ENCODE measurements at regions of chr4 and their contacts with region 1.

Region 1: GRCh38 chr4:38675146-38676121 is 11.4 kb downstream of the KLF3 start:
- DNase-seq: peak; percentile 94
- H3K4me3 ChIP-seq: peak overlapping the region in 2 of 4 donors; percentile 4 to 9
- H3K27ac ChIP-seq: peak overlapping the region; percentile 85 to 100 (median 99)
- H3K4me1 ChIP-seq: peaks cover 84 to 99% (median 96%) of the 10 kb centered on the region in 4 donors
- H3K27me3 ChIP-seq: no peaks in the 10 kb centered on the region
- CTCF ChIP-seq: peak; percentile 88 to 95 (median 93)
- EP300 ChIP-seq: no peak
- POLR2A ChIP-seq: no peak

Region 2: GRCh38 chr4:36761607-36762006 is 1913.8 kb before region 1 on chr4:
- intact Hi-C with region 1: no loop called
- DNase-seq: no peak
- H3K4me3 ChIP-seq: no peak overlapping the region
- H3K27ac ChIP-seq: no peak overlapping the region
- H3K4me1 ChIP-seq: no peaks in the 10 kb centered on the region
- H3K27me3 ChIP-seq: peaks cover 0 to 4% (median 0%) of the 10 kb centered on the region in 4 donors
- CTCF ChIP-seq: no peak
- EP300 ChIP-seq: no peak
- POLR2A ChIP-seq: no peak

Region 3: DNA sequence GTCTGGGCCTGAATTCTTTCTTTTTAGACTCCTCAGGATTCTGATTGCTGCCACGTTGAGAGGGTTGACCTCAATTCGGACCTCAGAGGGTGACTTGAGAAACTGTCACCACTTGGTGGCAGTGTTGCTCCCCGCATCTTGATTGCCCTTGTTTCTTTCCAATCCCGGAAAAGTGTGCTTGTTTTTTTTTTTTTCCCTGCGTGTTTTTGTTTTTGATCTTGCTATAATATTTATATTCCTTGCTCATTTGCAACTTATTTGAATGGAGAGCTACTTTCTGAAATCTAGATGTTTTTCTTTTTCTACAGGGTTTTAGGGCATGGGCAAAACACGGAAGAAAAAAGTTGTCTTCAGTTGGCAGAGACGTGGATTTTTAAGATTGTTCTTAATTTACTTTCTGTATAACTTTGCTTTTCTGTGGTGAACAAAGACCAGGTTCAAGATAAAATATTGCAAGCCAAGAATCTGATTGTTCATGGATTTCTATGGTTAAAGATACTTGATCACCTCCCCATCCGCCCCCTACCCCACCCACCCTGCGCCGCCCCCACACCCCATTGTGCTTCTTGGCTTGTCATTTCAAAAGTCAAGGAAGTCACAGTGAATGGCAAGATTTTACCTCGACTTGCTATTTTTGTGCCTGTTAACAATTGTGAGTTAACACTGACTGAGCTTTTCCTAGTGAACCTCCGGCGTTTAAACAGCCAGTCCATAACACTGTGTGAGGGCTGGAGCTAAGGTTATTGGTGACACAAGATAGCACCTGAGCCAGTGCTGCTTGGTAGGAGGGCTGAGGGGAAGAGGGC is 613.1 kb before region 1 on chr4:
- intact Hi-C with region 1: loop called (anchors 5 kb)
- DNase-seq: peak; percentile 96
- H3K4me3 ChIP-seq: peak overlapping the region; percentile 28 to 46 (median 40)
- H3K27ac ChIP-seq: peak overlapping the region; percentile 22 to 63 (median 56)
- H3K4me1 ChIP-seq: peaks cover 4 to 37% (median 18%) of the 10 kb centered on the region in 4 donors
- H3K27me3 ChIP-seq: no peaks in the 10 kb centered on the region
- CTCF ChIP-seq: peak; percentile 72 to 84 (median 83)
- EP300 ChIP-seq: no peak
- POLR2A ChIP-seq: no peak

Region 4: GRCh38 chr4:38179690-38180377 is 495.6 kb before region 1 on chr4:
- intact Hi-C with region 1: loop called (anchors 2 kb)
- DNase-seq: peak; percentile 94
- H3K4me3 ChIP-seq: no peak overlapping the region
- H3K27ac ChIP-seq: peak overlapping the region in 3 of 4 donors; percentile 55 to 57 (median 56)
- H3K4me1 ChIP-seq: peaks cover 10 to 16% (median 12%) of the 10 kb centered on the region in 4 donors
- H3K27me3 ChIP-seq: no peaks in the 10 kb centered on the region
- CTCF ChIP-seq: peak; percentile 86 to 94 (median 93)
- EP300 ChIP-seq: no peak
- POLR2A ChIP-seq: peak; percentile 10

Region 5: GRCh38 chr4:38319456-38320342 is 355.7 kb before region 1 on chr4:
- intact Hi-C with region 1: loop called (anchors 2 kb)
- DNase-seq: peak; percentile 99
- H3K4me3 ChIP-seq: peak overlapping the region; percentile 29 to 46 (median 38)
- H3K27ac ChIP-seq: peak overlapping the region; percentile 73 to 85 (median 80)
- H3K4me1 ChIP-seq: peaks cover 20 to 40% (median 29%) of the 10 kb centered on the region in 4 donors
- H3K27me3 ChIP-seq: no peaks in the 10 kb centered on the region
- CTCF ChIP-seq: peak in 2 of 3 experiments; percentile 98 to 99
- EP300 ChIP-seq: no peak
- POLR2A ChIP-seq: no peak

Region 6: DNA sequence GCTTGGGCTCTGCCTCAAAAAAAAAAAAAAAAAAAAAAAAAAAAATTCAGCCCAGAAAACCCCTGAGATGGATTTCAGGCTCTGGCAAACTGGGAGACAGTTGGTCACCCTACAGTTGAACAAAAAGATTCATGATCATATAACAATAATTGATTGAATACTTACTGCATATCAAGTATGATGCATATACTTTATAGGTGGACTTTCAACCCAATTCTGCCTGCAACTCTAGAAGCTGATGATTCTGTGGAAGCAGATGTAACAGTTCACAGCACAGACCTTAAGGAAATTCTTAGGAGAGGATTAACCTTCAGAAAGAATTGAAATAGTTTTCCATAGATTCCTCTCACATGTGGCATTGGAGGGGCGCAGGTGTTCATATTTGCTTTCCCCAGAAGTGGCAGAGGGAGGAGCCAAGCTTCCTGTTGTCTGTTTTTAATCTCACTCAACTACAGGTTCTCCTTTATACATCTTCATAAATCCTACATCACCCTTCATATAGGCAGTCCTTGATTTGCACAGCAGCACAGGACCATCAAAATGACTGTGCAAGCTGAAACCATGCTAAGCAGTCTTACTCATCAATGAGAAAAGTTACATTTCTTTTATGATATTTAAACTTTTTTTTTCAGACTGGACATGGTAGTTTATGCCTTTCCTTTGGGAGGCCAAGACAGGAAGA is 160.8 kb before region 1 on chr4:
- intact Hi-C with region 1: loop called (anchors 5 kb)
- DNase-seq: no peak
- H3K4me3 ChIP-seq: no peak overlapping the region
- H3K27ac ChIP-seq: no peak overlapping the region
- H3K4me1 ChIP-seq: peaks cover 0 to 9% (median 3%) of the 10 kb centered on the region in 4 donors
- H3K27me3 ChIP-seq: no peaks in the 10 kb centered on the region
- CTCF ChIP-seq: no peak
- EP300 ChIP-seq: no peak
- POLR2A ChIP-seq: no peak

Region 7: GRCh38 chr4:38730830-38731646 is 55.6 kb after region 1 on chr4:
- intact Hi-C with region 1: loop called (anchors 5 kb)
- DNase-seq: no peak
- H3K4me3 ChIP-seq: no peak overlapping the region
- H3K27ac ChIP-seq: no peak overlapping the region
- H3K4me1 ChIP-seq: peaks cover 7 to 10% (median 9%) of the 10 kb centered on the region in 4 donors
- H3K27me3 ChIP-seq: no peaks in the 10 kb centered on the region
- CTCF ChIP-seq: peak; percentile 91 to 97 (median 95)
- EP300 ChIP-seq: no peak
- POLR2A ChIP-seq: no peak

Region 8: GRCh38 chr4:39032218-39033085 is 357.0 kb after region 1 on chr4 and contains the start of gene TMEM156:
- intact Hi-C with region 1: no loop called
- DNase-seq: no peak
- H3K4me3 ChIP-seq: no peak within 1 kb of the TSS
- H3K27ac ChIP-seq: no peak within 1 kb of the TSS
- H3K4me1 ChIP-seq: no peaks in the 10 kb centered on the region
- H3K27me3 ChIP-seq: no peaks in the 10 kb centered on the region
- CTCF ChIP-seq: no peak
- EP300 ChIP-seq: no peak
- POLR2A ChIP-seq: no peak
- total RNA-seq, gene TMEM156: 0.50 TPM in 1 of 4 donors, not detected in the others